ENCODE measurements at regions of chr5 and their contacts with region 1.

Region 1: DNA sequence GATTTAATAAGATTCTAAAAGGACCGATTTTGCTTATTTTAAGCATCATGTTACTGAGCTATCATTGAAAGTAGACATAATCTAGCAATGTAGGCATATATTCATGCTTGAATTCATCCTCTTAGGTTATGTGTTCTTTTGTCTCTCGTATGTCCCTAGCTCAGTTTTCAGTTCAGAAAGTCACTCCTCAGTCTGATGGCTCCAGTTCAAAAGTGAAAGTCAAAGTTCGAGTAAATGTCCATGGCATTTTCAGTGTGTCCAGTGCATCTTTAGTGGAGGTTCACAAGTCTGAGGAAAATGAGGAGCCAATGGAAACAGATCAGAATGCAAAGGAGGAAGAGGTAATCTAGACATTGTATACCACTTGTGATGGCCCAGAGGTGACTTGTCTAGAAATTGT is 39.2 kb downstream of the HSPA4 start:
- DNase-seq: no peak
- H3K4me3 ChIP-seq: no peak overlapping the region
- H3K27ac ChIP-seq: no peak overlapping the region
- H3K4me1 ChIP-seq: no peaks in the 10 kb centered on the region
- H3K27me3 ChIP-seq: no peaks in the 10 kb centered on the region
- CTCF ChIP-seq: no peak

Region 2: DNA sequence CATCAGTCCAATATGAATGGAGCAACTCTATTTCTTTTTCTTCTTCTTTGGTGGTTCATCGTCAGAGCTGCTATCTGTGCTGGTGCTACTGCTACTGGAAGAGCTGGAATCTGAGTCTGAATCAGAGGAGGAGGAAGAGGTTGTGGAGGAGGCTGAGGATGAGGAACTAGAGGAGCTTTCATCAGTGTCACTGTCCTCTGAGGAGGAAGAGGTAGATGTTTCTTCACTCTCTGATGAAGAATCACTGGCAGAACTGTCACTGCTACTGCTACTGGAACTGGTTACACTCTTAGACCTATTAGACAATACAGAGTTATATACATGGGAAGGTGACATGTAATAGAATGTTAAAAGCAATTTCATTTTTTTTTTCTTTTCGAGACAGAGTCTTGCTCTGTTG is 92.5 kb before region 1 on chr5:
- CTCF ChIA-PET with region 1: no interaction called
- dilution Hi-C with region 1: loop called (anchors 5 kb)
- in situ Hi-C with region 1: no loop called
- intact Hi-C with region 1: no loop called
- DNase-seq: no peak
- H3K4me3 ChIP-seq: no peak overlapping the region
- H3K27ac ChIP-seq: no peak overlapping the region
- H3K4me1 ChIP-seq: no peaks in the 10 kb centered on the region
- H3K27me3 ChIP-seq: no peaks in the 10 kb centered on the region
- CTCF ChIP-seq: no peak

Region 3: GRCh38 chr5:133154274-133155074 is 63.4 kb after region 1 on chr5:
- CTCF ChIA-PET with region 1: no interaction called
- dilution Hi-C with region 1: loop called (anchors 5 kb)
- in situ Hi-C with region 1: no loop called
- intact Hi-C with region 1: no loop called
- DNase-seq: no peak
- H3K4me3 ChIP-seq: no peak overlapping the region
- H3K27ac ChIP-seq: no peak overlapping the region
- H3K4me1 ChIP-seq: no peaks in the 10 kb centered on the region
- H3K27me3 ChIP-seq: no peaks in the 10 kb centered on the region
- CTCF ChIP-seq: no peak

Region 4: DNA sequence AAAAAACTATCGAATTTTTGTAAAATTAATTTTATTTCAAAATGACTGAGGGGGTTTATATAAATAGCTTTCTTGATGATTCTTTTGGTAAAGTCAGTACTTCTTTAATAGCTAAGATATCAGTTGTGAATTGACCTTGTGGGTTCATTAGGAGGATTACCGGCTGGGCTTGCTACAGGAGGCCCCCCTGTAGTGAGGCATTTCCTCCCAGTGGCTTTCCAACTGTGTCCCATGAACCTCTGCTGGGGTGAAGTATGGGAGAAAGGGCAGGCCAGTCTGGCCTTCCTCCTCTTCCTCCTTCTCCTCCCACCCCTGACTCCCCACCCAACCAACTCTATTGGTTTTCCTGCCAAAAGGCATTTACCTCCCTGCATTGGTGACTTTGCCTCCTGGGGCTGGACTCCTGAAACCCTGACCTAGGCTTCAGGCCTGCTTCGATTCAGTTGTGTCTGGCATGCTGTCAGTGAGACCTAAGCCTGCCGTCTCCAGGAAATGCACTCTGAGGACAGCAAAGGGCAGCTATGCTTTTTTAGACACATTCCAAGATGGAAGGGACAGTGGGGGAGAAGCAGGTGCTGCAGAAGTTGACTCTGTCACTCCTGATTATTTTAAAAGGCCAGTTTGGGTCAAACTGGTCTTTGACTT is 105.5 kb after region 1 on chr5:
- CTCF ChIA-PET with region 1: no interaction called
- dilution Hi-C with region 1: no loop called
- in situ Hi-C with region 1: no loop called
- intact Hi-C with region 1: no loop called
- DNase-seq: no peak
- H3K4me3 ChIP-seq: no peak overlapping the region
- H3K27ac ChIP-seq: no peak overlapping the region
- H3K4me1 ChIP-seq: no peaks in the 10 kb centered on the region
- H3K27me3 ChIP-seq: no peaks in the 10 kb centered on the region
- CTCF ChIP-seq: no peak